G401 (cell line): ENCODE measurements at regions of chr2 and their contacts with region 1.

Region 1: GRCh38 chr2:217988014-217988839 is 14.6 kb downstream of the TNS1 start:
- DNase-seq: peak; percentile 42

Region 2: GRCh38 chr2:217785544-217786045 is 202.6 kb before region 1 on chr2:
- in situ Hi-C with region 1: loop called (anchors 10 kb)
- DNase-seq: peak; percentile 46

Region 3: GRCh38 chr2:217928324-217929181 is 59.7 kb before region 1 on chr2:
- in situ Hi-C with region 1: no loop called
- DNase-seq: no peak

Region 4: GRCh38 chr2:218026676-218027425 is 38.6 kb after region 1 on chr2:
- in situ Hi-C with region 1: no loop called
- DNase-seq: peak; percentile 4